ENCODE measurements at regions of chr3 and their contacts with region 1.

Region 1: GRCh38 chr3:123258811-123259420 is 57.2 kb downstream of the SEC22A start:
- DNase-seq: peak; percentile 56
- H3K4me3 ChIP-seq: no peak overlapping the region; a peak in 1 of 4 replicates
- H3K27ac ChIP-seq: no peak overlapping the region
- H3K4me1 ChIP-seq: peaks cover 0 to 3% of the 10 kb centered on the region in 2 experiments; a peak in 1 of 4 replicates
- H3K27me3 ChIP-seq: no peaks in the 10 kb centered on the region
- CTCF ChIP-seq: peak; percentile 78
- EP300 ChIP-seq: no peak
- RAD21 ChIP-seq: peak; percentile 92

Region 2: DNA sequence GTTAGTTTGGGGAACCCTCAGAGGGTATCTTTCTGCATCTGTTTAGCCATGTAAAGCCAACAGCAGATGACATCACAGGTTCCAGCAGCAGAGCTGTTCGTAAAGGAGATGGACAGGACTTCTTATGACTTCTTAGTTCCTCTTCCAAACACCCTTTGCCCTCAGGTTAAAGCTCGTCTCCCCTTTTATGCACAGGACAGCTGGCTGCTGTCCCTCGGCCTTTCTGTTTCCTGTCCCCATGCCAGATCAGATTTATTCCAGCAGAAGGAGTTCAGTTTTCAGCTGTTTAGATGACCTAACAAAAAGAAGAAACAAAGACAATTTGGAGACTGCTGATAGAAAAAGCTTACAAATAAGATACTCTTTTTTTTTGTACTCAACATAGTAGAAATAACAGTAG is 12.1 kb before region 1 on chr3:
- CTCF ChIA-PET with region 1: interaction called, 17 read pairs
- POLR2A ChIA-PET with region 1: no interaction called
- DNase-seq: peak; percentile 15
- H3K4me3 ChIP-seq: no peak overlapping the region
- H3K27ac ChIP-seq: peak overlapping the region in 1 of 2 experiments; percentile 22; a peak in 1 of 4 replicates
- H3K4me1 ChIP-seq: peaks cover 0 to 6% of the 10 kb centered on the region in 2 experiments; a peak in 2 of 4 replicates
- H3K27me3 ChIP-seq: no peaks in the 10 kb centered on the region
- CTCF ChIP-seq: no peak
- EP300 ChIP-seq: no peak
- RAD21 ChIP-seq: no peak